ENCODE measurements at regions of chr10 and their contacts with region 1.

Region 1: GRCh38 chr10:97612386-97612785 is 20.9 kb downstream of the MORN4 start:
- DNase-seq: no peak
- H3K4me3 Mint-ChIP-seq: no peak overlapping the region
- H3K27ac Mint-ChIP-seq: no peak overlapping the region
- H3K4me1 Mint-ChIP-seq: no peaks in the 10 kb centered on the region
- H3K27me3 Mint-ChIP-seq: no peaks in the 10 kb centered on the region

Region 2: DNA sequence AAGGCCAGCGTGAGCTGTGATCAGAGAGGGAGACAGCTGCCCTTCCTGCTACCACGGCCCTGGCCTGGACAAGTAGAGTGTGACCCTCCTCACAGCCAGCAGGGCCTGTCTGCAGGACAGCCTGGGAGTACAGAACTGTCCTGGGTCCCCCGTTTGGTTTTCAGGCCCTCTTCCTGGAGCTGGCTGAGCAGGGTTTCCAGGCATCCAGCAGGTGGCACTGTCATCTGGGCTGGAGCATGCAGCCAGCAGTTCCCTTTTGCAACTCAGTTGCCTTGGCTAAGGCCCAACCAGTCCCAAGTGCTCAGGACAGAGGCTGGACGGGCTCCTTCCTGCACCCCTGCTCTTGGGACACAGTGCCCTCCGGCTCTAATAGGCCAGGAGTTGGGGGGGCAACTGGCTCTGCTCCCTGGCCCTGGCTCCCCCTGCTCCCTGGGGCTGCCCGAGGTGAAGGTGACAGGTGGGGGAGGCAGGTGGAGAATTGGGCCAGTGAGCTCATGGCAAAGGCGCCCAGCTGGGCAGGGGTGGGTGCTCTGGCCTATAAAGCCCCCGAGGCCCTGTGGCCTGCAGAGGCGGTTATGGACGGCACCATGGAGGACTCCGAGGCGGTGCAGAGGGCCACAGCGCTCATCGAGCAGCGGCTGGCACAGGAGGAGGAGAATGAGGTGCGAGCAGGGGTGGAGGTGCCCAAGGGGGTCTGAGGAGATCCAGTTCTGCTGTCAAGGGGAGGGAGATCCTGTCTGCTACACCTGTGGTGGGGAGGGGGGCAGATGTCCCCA is 40.0 kb before region 1 on chr10 and contains the start of gene ANKRD2:
- CTCF ChIA-PET with region 1: interaction called, 11 read pairs
- POLR2A ChIA-PET with region 1: no interaction called
- DNase-seq: peak; percentile 71
- H3K4me3 Mint-ChIP-seq: no peak within 1 kb of the TSS
- H3K27ac Mint-ChIP-seq: no peak within 1 kb of the TSS
- H3K4me1 Mint-ChIP-seq: no peaks in the 10 kb centered on the region
- H3K27me3 Mint-ChIP-seq: no peaks in the 10 kb centered on the region
- total RNA-seq, gene ANKRD2: 0.37 TPM in 1 of 2 experiments, not detected in the other

Measured in activated CD4-positive, alpha-beta T cell treated with anti-CD3 and anti-CD28 coated beads, Interleukin-2, amount 10 ng/mL, durations not matched to agents 7 days and 5 days (primary cell).